Vagina (tissue), 2 donors: ENCODE measurements at regions of chr12 and their contacts with region 1.

Region 1: GRCh38 chr12:46372544-46373110 is at the start of gene SLC38A2:
- DNase-seq: peak in 1 of 2 donors; percentile 97
- H3K4me3 ChIP-seq: peak within 1 kb of the TSS; percentile 76 to 88
- H3K27ac ChIP-seq: peak within 1 kb of the TSS; percentile 99
- H3K4me1 ChIP-seq: peaks cover 42% of the 10 kb centered on the region
- H3K27me3 ChIP-seq: no peaks in the 10 kb centered on the region
- CTCF ChIP-seq: no peak
- POLR2A ChIP-seq: peak; percentile 27 to 99
- total RNA-seq, gene SLC38A2: 352 TPM

Region 2: DNA sequence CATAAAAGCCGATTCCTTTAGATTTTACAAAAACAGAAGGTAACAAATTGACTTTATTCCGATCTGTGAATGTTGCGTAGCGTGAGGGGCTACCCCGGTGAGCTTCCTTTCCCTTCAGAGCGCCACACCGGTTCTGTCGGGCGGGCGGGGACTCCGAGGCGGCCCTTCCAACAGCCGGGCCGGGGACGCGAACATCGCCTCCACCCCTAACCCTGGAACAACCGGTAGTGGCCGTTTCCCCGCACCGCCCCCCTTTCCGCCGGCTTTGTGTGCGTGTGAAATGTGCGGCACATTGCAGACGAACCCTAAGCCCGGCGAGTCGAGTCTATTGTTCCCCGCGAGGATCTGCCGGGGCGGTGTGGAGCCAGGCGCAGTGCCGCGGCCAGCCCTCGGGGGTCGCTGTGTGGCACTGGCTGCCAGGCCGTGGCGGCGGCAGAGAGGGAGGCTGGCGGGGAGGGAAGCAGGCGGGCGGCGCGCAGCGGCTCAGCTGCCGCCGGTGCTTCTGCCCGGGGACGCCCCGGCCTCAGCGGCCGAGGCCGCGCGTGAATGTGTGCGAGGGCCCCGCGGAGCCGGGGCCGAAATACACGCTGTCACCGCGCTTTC is 643.9 kb before region 1 on chr12:
- intact Hi-C with region 1: loop called (anchors 5 kb)
- DNase-seq: peak in 1 of 2 donors; percentile 97
- H3K4me3 ChIP-seq: peak overlapping the region; percentile 67 to 86
- H3K27ac ChIP-seq: peak overlapping the region; percentile 100
- H3K4me1 ChIP-seq: peaks cover 43% of the 10 kb centered on the region
- H3K27me3 ChIP-seq: no peaks in the 10 kb centered on the region
- CTCF ChIP-seq: peak; percentile 81 to 89 (median 83)
- POLR2A ChIP-seq: peak; percentile 8 to 71

Region 3: GRCh38 chr12:46661110-46661845 is 288.7 kb after region 1 on chr12:
- intact Hi-C with region 1: loop called (anchors 5 kb)
- DNase-seq: no peak
- H3K4me3 ChIP-seq: no peak overlapping the region
- H3K27ac ChIP-seq: peak overlapping the region; percentile 55
- H3K4me1 ChIP-seq: peaks cover 52% of the 10 kb centered on the region
- H3K27me3 ChIP-seq: no peaks in the 10 kb centered on the region
- CTCF ChIP-seq: peak; percentile 23 to 76 (median 67)
- POLR2A ChIP-seq: no peak

Region 4: GRCh38 chr12:46811185-46811584 is 438.6 kb after region 1 on chr12:
- intact Hi-C with region 1: no loop called
- DNase-seq: no peak
- H3K4me3 ChIP-seq: no peak overlapping the region
- H3K27ac ChIP-seq: no peak overlapping the region
- H3K4me1 ChIP-seq: no peaks in the 10 kb centered on the region
- H3K27me3 ChIP-seq: no peaks in the 10 kb centered on the region
- CTCF ChIP-seq: no peak
- POLR2A ChIP-seq: no peak